Activated naive CD4-positive, alpha-beta T cell treated with anti-CD3 and anti-CD28 coated beads for 36 hours (primary cell): ENCODE measurements at regions of chr11 and their contacts with region 1.

Region 1: DNA sequence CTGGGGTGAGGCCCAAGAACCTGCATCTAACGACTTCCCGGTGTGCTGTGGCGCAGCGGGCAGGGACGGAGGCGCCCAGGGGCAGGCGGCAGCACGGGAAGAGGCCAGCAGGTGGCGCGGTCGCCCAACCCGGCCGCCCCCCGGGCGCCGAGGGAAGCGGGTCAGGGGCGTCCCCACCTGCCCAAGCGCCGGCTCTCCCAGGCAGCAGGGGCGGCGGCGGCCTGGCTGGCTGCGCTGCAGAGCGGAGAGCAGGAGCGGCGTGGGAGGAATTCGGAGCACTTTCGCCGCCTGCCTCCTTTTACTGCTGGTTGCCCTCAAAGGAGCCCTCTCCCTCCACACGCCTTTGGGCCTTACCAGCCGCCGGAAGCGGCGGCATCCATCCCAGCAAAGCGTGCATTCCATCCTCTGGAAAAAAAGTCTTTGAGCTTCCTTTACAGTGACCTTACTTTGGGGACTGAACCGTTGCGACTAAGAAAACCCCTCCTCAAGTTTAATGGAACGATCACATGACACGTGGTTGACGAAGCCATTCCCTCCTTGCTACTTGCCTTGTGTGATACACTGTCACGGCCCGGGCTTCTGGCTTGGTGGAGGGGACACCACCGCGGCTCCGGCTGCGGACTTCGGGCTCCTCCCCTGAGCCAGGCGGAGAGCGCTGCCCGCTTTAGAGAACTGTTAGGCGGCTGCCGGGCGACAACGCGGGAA is 106.8 kb upstream of the CLMP start:
- DNase-seq: peak; percentile 82
- H3K4me3 Mint-ChIP-seq: peak overlapping the region; percentile 19
- H3K27ac Mint-ChIP-seq: peak overlapping the region; percentile 87
- H3K4me1 Mint-ChIP-seq: peaks cover 41% of the 10 kb centered on the region
- H3K27me3 Mint-ChIP-seq: peaks cover 6% of the 10 kb centered on the region

Region 2: GRCh38 chr11:123338330-123339005 is 36.6 kb after region 1 on chr11:
- CTCF ChIA-PET with region 1: interaction called, 5 read pairs
- intact Hi-C with region 1: loop called (anchors 1 kb)
- DNase-seq: peak; percentile 12
- H3K4me3 Mint-ChIP-seq: no peak overlapping the region
- H3K27ac Mint-ChIP-seq: no peak overlapping the region
- H3K4me1 Mint-ChIP-seq: peaks cover 10% of the 10 kb centered on the region
- H3K27me3 Mint-ChIP-seq: peaks cover 27% of the 10 kb centered on the region

Region 3: DNA sequence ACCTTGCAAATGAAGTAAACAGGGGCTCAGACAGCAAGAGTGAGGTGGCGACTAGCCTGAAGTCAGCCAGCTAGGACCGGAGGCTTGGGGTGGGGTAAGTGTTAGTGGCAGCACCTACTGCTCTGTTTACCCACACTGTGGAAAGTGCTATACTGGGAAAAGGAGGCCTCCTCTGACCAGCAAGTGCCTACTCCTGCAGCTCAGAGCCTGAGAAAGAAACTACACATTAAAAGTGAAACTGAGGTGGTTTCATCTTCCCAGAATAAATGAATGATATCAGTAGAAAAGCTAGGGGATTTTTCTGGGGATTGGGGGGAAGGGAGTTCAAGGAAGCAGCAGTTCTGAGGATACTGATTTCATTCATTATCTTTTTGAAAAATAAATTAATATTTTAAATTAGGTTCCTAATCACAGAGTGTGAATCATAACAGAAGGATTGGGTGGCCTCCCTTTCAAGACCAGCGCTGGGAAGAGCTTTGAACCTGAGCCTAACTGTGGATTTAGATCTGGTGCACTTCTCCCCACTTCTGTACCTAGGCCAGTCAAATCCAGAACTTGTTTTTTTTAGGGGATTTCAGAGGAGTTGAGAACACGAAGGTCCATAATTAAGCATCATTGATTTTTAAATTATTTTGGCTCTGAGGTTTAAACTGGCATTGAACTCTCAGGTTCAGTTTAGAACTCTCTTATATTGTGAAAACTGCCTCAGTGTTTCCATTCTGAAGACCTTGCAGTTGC is 80.1 kb after region 1 on chr11:
- CTCF ChIA-PET with region 1: interaction called, 9 read pairs
- intact Hi-C with region 1: loop called (anchors 1 kb)
- DNase-seq: peak; percentile 85
- H3K4me3 Mint-ChIP-seq: peak overlapping the region; percentile 58
- H3K27ac Mint-ChIP-seq: peak overlapping the region; percentile 78
- H3K4me1 Mint-ChIP-seq: peaks cover 18% of the 10 kb centered on the region
- H3K27me3 Mint-ChIP-seq: peaks cover 6% of the 10 kb centered on the region

Region 4: GRCh38 chr11:123429913-123430720 is 128.3 kb after region 1 on chr11 and contains the start of gene GRAMD1B:
- CTCF ChIA-PET with region 1: interaction called, 32 read pairs
- intact Hi-C with region 1: loop called (anchors 1 kb)
- DNase-seq: peak; percentile 87
- H3K4me3 Mint-ChIP-seq: peak within 1 kb of the TSS; percentile 92
- H3K27ac Mint-ChIP-seq: peak within 1 kb of the TSS; percentile 85
- H3K4me1 Mint-ChIP-seq: peaks cover 33% of the 10 kb centered on the region
- H3K27me3 Mint-ChIP-seq: peaks cover 2% of the 10 kb centered on the region
- total RNA-seq, gene GRAMD1B: 43.7 to 47.2 TPM

Region 5: DNA sequence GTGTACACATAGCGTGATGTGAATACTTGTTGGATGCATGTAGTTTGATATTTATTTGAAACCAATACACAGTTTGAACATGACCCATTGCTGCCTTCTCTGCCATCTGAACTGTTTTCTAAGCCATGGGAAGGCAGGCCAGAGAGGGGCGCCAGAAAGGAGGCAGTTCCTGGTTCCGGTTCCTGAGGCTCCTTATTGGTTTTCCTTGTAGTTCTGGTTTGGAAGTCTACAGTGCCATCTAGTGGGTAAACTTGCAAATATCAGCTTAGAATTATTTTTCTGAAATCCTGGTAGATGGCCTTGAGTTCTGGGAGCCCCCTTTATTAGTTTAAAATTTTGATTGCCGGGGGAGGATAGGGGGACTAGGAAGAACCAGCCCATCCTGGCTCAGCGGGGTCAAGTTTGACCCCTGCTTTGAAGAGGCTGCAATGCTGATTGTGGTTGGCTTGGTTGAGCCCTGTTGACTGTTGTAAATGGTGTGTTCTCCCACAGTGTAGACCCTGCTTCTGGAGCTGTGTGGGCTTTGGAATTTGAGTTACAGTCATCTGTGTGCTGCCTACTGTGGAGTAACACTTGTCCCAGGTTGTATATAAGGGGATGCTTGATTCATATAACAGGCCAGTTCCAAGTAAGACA is 176.6 kb after region 1 on chr11:
- CTCF ChIA-PET with region 1: interaction called, 20 read pairs
- intact Hi-C with region 1: loop called (anchors 1 kb)
- DNase-seq: peak; percentile 43
- H3K4me3 Mint-ChIP-seq: no peak overlapping the region
- H3K27ac Mint-ChIP-seq: no peak overlapping the region
- H3K4me1 Mint-ChIP-seq: peaks cover 26% of the 10 kb centered on the region
- H3K27me3 Mint-ChIP-seq: no peaks in the 10 kb centered on the region

Region 6: DNA sequence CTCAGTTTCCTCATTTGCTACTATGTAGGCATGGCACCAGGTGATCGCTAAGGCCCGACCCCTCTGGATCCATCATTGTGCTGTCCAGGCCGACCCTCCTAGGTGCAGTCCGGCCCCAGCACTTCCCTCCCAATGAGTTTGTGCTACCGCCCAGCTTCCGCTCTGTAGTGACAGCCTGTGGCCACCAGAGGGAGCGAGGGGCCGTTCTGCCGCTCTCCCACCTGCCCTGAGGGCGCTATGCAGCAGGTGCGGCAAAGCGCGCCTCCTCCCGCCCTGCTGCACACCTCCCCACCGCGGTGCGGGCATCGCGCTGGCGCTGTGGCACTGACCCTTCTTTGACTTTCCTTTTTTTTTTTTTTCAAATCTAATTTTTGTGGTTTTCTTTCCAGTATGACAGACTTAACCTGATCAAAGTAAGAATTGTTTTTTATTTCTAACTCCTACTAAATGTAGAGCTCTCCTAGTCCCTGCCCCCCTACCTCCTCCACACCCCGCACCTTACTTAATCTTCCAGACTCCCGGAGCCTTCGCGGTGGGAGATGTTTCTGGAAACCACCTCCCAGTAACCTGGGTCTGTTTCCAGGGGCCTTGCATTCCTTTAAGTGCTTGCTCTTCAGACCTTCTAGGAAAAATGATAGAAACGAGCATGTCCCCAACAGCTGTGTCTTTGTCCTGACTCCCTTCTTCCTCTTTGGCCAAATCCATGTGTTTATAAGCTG is 278.9 kb after region 1 on chr11:
- CTCF ChIA-PET with region 1: interaction called, 5 read pairs
- intact Hi-C with region 1: loop called (anchors 1 kb)
- DNase-seq: peak; percentile 78
- H3K4me3 Mint-ChIP-seq: no peak overlapping the region
- H3K27ac Mint-ChIP-seq: no peak overlapping the region
- H3K4me1 Mint-ChIP-seq: peaks cover 9% of the 10 kb centered on the region
- H3K27me3 Mint-ChIP-seq: peaks cover 2% of the 10 kb centered on the region